Activated CD4-positive, alpha-beta memory T cell treated with anti-CD3 and anti-CD28 coated beads for 36 hours (primary cell): ENCODE measurements at regions of chr5 and their contacts with region 1.

Region 1: GRCh38 chr5:58925627-58926540 is 343.0 kb downstream of the RAB3C start:
- DNase-seq: peak; percentile 48
- H3K4me3 Mint-ChIP-seq: no peak overlapping the region
- H3K27ac Mint-ChIP-seq: peak overlapping the region; percentile 85
- H3K4me1 Mint-ChIP-seq: peaks cover 41% of the 10 kb centered on the region
- H3K27me3 Mint-ChIP-seq: peaks cover 2% of the 10 kb centered on the region

Region 2: DNA sequence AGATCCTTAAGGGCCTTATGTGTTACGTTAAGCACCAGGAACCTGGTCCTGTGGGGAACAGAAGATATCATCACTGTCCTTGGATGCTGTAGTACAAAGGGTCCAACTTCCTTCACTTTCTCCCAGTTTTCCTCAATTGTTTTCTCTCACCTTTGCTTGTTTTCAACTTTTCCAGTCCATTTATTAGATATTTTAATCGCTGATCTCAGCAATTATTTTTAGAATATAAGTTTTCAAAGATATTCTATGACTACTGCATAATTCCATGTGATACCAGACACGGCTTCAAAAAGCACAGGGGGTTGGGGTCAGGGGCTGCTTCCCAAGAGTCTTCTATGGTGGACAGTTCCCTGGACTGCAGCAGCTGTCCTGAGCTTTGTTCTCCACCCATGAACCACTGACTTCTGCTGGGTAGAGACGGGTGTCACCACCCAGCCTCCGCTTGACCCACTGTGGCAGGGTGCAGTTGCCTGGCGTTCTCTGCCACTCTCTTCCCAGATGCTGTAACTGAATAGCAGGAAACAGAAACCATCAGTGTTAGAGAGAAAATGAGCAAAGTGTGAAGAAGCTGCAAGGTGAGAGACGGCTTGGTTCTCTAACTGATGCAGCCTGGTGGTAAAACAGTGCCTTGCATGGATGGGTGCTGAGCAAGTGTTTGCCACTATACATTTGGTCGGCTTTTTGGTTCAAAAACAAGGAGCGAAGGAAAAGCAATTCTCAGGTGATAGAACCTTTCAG is 40.0 kb after region 1 on chr5:
- CTCF ChIA-PET with region 1: interaction called, 3 read pairs
- POLR2A ChIA-PET with region 1: no interaction called
- intact Hi-C with region 1: loop called (anchors 5 kb)
- DNase-seq: no peak
- H3K4me3 Mint-ChIP-seq: no peak overlapping the region
- H3K27ac Mint-ChIP-seq: no peak overlapping the region
- H3K4me1 Mint-ChIP-seq: peaks cover 15% of the 10 kb centered on the region
- H3K27me3 Mint-ChIP-seq: no peaks in the 10 kb centered on the region